Activated CD4-positive, alpha-beta memory T cell treated with anti-CD3 and anti-CD28 coated beads for 36 hours (primary cell): ENCODE measurements at regions of chr2 and their contacts with region 1.

Region 1: GRCh38 chr2:99180755-99181623 is at the starts of genes MITD1 and MRPL30:
- DNase-seq: peak; percentile 95
- H3K4me3 Mint-ChIP-seq: peak within 1 kb of the TSS; percentile 98
- H3K27ac Mint-ChIP-seq: peak within 1 kb of the TSS; percentile 97
- H3K4me1 Mint-ChIP-seq: peaks cover 49% of the 10 kb centered on the region
- H3K27me3 Mint-ChIP-seq: no peaks in the 10 kb centered on the region
- total RNA-seq, gene MITD1: 67.4 to 75.5 TPM
- total RNA-seq, gene MRPL30: 30.3 to 30.8 TPM

Region 2: DNA sequence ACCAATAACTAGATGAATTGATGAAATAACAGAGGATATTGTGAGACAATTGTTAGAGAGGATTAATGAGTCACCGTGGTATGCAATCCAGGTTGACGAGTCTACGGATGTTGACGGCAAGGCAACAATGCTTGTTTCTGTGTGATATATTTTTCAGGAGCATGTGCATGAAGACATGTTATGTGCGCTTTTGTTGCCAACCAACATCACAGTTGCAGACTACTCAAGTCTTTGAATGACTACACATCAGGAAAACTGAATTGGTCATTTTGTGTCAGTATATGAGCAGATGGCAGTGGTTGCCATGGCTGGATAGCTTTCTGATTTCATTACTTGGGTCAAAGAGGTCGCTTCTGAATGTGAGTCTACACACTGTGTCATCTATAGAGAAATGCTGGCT is 148.2 kb before region 1 on chr2:
- CTCF ChIA-PET with region 1: no interaction called
- POLR2A ChIA-PET with region 1: no interaction called
- intact Hi-C with region 1: no loop called
- DNase-seq: no peak
- H3K4me3 Mint-ChIP-seq: no peak overlapping the region
- H3K27ac Mint-ChIP-seq: no peak overlapping the region
- H3K4me1 Mint-ChIP-seq: no peaks in the 10 kb centered on the region
- H3K27me3 Mint-ChIP-seq: no peaks in the 10 kb centered on the region

Region 3: DNA sequence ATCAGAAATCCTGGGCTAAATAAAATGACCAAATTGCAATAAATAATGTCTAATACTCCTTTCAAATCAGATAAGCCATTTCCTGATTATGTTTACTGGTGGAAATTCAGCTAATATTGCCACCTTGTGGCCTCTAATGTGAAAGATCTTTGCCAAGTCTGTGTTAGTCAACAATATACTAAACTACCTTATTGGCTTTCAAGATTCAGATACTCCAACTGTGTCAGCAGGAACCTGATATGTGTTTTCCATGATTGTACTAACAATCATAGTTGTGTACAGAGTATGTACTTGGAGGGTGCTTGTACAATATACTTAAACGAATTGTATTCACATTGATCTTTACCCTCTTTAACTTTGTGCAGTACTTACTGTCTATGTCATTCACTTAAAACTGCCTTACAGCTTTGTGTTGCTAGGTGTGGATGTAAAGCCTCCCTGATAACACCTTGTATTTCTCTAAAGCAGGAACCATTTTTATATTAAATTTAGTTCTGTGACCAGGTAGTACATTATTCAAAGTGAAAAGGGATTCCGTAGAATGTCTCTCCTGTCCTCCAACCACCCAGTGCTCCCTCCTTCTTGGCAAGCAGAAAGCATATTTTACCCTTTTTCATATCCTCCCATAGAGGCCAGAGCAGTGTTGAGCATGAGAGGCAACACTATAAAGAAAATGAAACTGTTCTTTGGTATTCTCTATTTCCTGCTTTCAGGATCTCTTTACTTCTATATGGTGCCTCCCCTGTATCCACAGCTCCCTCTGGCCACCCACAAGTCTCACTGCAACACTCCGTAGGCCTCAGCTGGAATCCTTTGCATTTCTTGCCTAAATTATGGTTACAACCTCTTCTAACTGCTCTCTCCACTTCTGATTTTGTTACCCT is 114.7 kb before region 1 on chr2:
- CTCF ChIA-PET with region 1: no interaction called
- POLR2A ChIA-PET with region 1: no interaction called
- intact Hi-C with region 1: loop called (anchors 1 kb)
- DNase-seq: peak; percentile 46
- H3K4me3 Mint-ChIP-seq: no peak overlapping the region
- H3K27ac Mint-ChIP-seq: no peak overlapping the region
- H3K4me1 Mint-ChIP-seq: no peaks in the 10 kb centered on the region
- H3K27me3 Mint-ChIP-seq: no peaks in the 10 kb centered on the region

Region 4: GRCh38 chr2:99085421-99085820 is 95.6 kb before region 1 on chr2:
- CTCF ChIA-PET with region 1: no interaction called
- POLR2A ChIA-PET with region 1: no interaction called
- intact Hi-C with region 1: loop called (anchors 1 kb)
- DNase-seq: peak; percentile 12
- H3K4me3 Mint-ChIP-seq: no peak overlapping the region
- H3K27ac Mint-ChIP-seq: no peak overlapping the region
- H3K4me1 Mint-ChIP-seq: peaks cover 3% of the 10 kb centered on the region
- H3K27me3 Mint-ChIP-seq: peaks cover 6% of the 10 kb centered on the region

Region 5: DNA sequence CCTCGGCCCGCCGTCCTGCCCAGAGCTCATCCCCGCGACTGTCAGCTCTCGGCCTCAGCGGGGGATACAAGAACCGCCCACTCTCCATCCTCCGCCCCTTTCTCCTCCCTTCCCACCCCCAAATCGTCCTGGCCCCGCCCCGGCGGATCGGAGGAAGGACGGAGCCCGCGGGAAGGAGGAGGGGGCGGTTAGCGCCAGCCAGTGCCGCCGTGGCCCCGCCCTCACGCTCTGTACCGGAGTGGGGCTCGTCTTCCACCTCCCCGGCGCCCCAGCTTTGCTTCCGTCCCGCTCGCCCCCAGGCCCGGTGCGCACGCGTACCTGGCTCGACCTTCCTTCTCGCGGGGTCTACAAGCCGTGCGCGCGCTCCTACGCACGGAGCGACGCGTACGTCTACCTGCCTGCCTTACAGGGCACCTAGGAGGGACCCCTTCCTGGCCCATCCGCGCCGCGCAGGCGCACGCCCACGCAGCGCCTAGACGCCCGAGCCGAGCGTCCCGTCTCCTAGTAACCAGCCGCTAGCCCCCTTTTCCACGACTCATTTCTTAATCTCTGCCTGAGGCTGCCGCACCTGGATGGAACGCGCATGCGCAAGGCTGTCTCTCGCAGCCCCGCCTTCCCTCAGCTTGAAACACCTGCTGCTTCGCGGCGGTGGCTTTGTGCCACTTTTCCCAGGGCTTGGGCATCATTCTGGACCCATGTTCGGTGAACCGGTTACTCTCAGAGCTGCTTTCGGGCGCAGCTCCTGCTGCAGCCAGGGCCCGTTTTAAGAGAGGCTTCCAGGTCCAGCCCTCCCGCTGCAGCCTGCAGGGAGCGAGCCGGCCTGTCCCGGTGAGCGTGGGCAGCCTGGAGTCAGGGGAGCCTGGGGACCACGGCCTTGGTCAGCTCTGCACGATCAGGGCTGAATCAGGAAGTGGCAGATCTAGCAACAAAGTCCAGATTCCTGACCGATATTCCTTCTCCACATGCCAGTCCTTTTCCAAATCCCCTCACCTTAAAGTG is 39.6 kb before region 1 on chr2 and contains the start of gene C2orf15:
- CTCF ChIA-PET with region 1: interaction called, 4 read pairs
- POLR2A ChIA-PET with region 1: interaction called, 8 read pairs
- intact Hi-C with region 1: loop called (anchors 1 kb)
- DNase-seq: peak; percentile 98
- H3K4me3 Mint-ChIP-seq: peak within 1 kb of the TSS; percentile 93
- H3K27ac Mint-ChIP-seq: peak within 1 kb of the TSS; percentile 88
- H3K4me1 Mint-ChIP-seq: peaks cover 19% of the 10 kb centered on the region
- H3K27me3 Mint-ChIP-seq: no peaks in the 10 kb centered on the region
- total RNA-seq, gene C2orf15: 0.48 to 0.50 TPM

Region 6: DNA sequence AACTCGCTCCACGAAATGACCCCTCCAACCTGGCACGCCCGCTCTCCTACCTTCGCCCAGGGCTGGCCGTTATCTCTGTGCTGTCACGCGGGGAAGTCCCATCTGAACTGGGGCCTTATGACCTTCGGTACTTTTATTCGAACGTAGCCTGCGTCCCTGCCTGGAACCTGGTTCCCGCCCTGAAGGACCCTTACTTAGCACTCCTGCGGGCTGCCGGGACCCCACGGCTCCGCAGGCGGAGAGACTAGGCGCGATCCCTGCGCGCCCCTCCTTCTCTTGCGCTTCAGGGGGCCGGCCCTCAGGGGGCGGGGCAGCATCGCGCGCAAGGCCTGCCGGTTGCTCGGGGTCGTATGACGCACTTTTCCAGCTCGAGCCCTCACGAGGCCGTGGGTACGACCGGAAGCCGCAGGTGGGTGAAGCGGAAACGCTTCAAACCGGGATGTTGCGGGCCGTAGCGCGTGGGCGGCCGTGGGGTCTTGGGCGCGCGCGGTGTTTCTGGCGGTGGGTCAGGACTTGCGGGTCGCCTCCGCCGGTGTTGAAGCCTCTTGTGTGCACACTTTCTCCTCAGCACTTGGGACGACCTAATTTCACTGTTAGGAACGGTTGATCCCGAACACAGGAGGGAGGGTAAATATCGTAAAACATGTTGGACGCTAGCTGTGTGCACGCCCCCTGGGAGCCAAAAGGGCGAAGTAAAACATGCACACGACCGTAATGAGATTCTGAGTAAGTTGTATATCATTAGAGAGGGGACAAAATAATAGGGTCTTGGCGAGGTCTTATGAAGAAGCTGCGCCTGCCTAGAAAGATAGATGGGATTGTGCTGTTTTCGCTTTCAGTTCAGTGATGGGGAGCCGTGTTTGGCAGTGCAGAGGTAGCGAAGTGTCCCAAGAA is 26.1 kb before region 1 on chr2 and contains the starts of genes LIPT1 and TSGA10:
- CTCF ChIA-PET with region 1: interaction called, 7 read pairs
- POLR2A ChIA-PET with region 1: interaction called, 12 read pairs
- intact Hi-C with region 1: loop called (anchors 1 kb)
- DNase-seq: peak; percentile 96
- H3K4me3 Mint-ChIP-seq: no peak within 1 kb of the TSS
- H3K27ac Mint-ChIP-seq: peak within 1 kb of the TSS; percentile 91
- H3K4me1 Mint-ChIP-seq: peaks cover 24% of the 10 kb centered on the region
- H3K27me3 Mint-ChIP-seq: no peaks in the 10 kb centered on the region
- total RNA-seq, gene LIPT1: 3.3 to 4.6 TPM
- total RNA-seq, gene TSGA10: 6.3 to 7.0 TPM

Region 7: DNA sequence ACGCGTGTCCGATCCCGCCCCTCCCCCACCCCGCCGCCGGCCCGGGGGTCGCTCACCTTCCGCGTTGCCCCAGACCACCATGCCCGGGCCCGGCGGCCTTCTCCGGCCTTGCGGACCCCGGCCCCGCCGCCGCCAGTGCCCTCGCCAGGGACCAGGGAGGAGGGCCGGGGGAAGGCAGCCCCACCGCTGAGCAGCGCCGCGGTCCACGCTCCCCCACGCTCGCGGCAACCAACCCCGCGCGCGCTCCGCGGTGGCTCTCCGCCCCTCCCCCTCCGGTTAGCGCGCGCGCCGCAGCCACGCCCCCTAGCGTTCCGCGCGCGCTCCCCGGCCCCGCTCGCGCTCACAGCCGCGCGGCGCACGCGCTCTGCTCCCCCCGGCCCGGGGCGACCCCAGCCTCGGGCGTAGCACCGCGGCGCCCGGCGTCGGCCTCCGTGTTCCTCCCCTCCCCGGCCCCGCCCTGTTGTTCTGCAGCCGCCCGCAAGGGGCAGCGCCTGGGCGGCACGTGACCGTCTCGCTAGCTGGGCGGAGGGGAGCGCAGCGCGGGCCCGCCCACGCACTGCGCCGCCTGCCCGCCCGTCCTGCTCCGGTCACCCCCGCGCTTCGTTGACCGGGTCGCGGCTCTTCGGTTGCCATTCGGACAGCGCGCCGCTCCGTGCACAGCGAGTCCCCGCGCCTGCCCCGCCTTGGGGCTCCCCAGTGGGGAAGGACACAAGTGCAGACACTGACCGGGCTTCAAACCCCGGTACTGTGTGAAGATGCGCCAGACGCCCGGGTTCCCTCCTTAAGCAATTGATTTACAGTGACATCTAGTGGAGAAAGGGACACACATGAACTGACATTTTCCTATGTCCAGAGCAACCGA is 309.0 kb after region 1 on chr2 and contains the start of gene REV1:
- CTCF ChIA-PET with region 1: no interaction called
- POLR2A ChIA-PET with region 1: no interaction called
- intact Hi-C with region 1: loop called (anchors 1 kb)
- DNase-seq: peak; percentile 95
- H3K4me3 Mint-ChIP-seq: peak within 1 kb of the TSS; percentile 97
- H3K27ac Mint-ChIP-seq: peak within 1 kb of the TSS; percentile 91
- H3K4me1 Mint-ChIP-seq: peaks cover 32% of the 10 kb centered on the region
- H3K27me3 Mint-ChIP-seq: no peaks in the 10 kb centered on the region
- total RNA-seq, gene REV1: 22.6 to 30.6 TPM

Region 8: DNA sequence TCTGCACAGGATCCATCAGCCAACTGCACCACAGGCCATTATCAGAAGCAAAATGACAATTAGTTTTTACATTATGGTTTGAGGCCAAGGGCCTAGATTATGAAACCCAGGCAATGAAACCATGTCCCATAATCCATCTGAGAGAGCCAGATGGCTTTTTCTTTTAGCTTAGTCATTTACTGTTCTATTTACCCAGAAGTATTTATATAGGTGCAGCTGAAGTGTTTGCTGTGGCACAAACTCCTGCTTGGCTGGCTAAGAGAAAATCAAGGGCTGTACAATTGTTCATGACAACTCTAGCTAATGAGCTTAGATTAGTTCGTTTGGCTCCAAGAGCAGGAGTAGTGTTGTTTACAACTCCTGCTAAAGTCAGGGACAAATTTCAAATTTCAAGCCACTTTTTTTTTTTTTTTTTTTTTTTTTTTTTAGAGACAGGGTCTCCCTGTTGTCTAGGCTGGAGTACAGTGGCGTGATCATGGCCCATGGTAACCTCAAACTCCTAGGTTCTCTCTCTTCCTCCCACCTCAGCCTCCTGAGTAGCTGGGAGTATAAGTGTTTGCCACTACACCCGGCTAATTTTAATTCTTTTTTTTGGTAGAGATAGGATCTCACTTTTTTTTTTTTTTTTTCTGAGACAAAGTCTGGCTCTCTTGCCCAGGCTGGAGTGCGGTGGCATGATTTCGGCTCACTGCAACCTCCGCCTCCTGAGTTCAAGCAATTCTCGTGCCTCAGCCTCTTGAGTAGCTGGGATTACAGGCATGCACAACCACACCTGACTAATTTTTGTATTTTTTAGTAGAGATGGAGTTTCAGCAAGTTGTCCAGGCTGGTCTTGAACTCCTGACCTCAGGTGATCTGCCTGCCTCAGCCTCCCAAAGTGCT is 327.2 kb after region 1 on chr2:
- CTCF ChIA-PET with region 1: no interaction called
- POLR2A ChIA-PET with region 1: no interaction called
- intact Hi-C with region 1: no loop called
- DNase-seq: no peak
- H3K4me3 Mint-ChIP-seq: no peak overlapping the region
- H3K27ac Mint-ChIP-seq: no peak overlapping the region
- H3K4me1 Mint-ChIP-seq: peaks cover 18% of the 10 kb centered on the region
- H3K27me3 Mint-ChIP-seq: no peaks in the 10 kb centered on the region